Mammary epithelial cell (primary cell): ENCODE measurements at regions of chr10 and their contacts with region 1.

Region 1: GRCh38 chr10:91758303-91759146 is 39.7 kb upstream of the TNKS2 start:
- DNase-seq: peak; percentile 48
- H3K4me3 ChIP-seq: no peak overlapping the region
- H3K27ac ChIP-seq: no peak overlapping the region
- H3K4me1 ChIP-seq: no peaks in the 10 kb centered on the region
- H3K27me3 ChIP-seq: peaks cover 3% of the 10 kb centered on the region
- CTCF ChIP-seq: peak; percentile 68 to 70

Region 2: DNA sequence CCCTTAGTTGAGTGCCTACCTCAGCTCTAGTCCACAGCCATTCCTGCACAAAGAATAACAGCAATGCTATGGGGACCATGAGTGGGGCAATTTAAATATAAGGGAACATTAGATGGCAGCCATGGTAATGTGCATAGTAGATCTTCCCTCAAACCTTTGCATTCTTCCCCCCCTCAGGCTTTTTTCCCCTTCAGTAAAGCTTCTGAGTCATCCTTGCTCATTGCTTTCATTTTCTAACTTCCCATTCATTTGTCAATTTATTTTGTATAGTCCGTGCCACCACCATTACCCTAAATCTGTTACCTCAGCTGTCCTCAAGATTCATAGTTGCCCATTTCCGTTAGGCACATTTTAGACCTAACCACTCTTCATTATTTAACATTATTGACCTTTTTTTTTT is 337.7 kb before region 1 on chr10:
- CTCF ChIA-PET with region 1: no interaction called
- dilution Hi-C with region 1: no loop called
- in situ Hi-C with region 1: no loop called
- intact Hi-C with region 1: no loop called
- DNase-seq: peak; percentile 41
- H3K4me3 ChIP-seq: no peak overlapping the region
- H3K27ac ChIP-seq: no peak overlapping the region
- H3K4me1 ChIP-seq: peaks cover 3% of the 10 kb centered on the region
- H3K27me3 ChIP-seq: no peaks in the 10 kb centered on the region
- CTCF ChIP-seq: no peak

Region 3: DNA sequence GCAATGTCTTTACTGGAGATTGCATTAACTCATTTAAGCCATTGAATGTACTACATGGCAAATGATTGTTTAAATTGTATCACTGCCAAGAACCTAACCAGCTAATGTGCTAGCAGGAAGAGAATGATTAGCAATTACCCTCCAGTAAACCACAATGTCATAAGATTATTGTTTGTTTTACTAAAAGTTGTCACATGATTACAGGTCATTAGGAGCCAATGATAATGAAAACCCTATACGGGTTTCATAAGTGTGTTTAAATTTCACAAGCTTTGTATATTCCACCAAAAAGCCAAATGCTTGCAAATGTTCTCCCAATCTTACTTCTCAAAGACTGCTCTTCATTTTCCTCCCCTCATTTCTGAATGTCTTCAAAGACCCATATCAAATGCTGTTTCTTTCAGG is 49.1 kb before region 1 on chr10:
- CTCF ChIA-PET with region 1: no interaction called
- dilution Hi-C with region 1: no loop called
- in situ Hi-C with region 1: no loop called
- intact Hi-C with region 1: no loop called
- DNase-seq: peak; percentile 53
- H3K4me3 ChIP-seq: no peak overlapping the region
- H3K27ac ChIP-seq: no peak overlapping the region
- H3K4me1 ChIP-seq: no peaks in the 10 kb centered on the region
- H3K27me3 ChIP-seq: peaks cover 5% of the 10 kb centered on the region
- CTCF ChIP-seq: no peak

Region 4: GRCh38 chr10:91820144-91820543 is 61.6 kb after region 1 on chr10:
- CTCF ChIA-PET with region 1: no interaction called
- dilution Hi-C with region 1: no loop called
- in situ Hi-C with region 1: no loop called
- intact Hi-C with region 1: loop called (anchors 5 kb)
- DNase-seq: peak; percentile 72
- H3K4me3 ChIP-seq: no peak overlapping the region
- H3K27ac ChIP-seq: no peak overlapping the region
- H3K4me1 ChIP-seq: no peaks in the 10 kb centered on the region
- H3K27me3 ChIP-seq: no peaks in the 10 kb centered on the region
- CTCF ChIP-seq: no peak